ENCODE measurements at regions of chr5 and their contacts with region 1.

Region 1: GRCh38 chr5:128498844-128499455 is 39.1 kb downstream of the FBN2 start:
- DNase-seq: no peak
- ATAC-seq: no peak
- H3K4me3 ChIP-seq: no peak overlapping the region
- H3K27ac ChIP-seq: no peak overlapping the region
- H3K4me1 ChIP-seq: no peaks in the 10 kb centered on the region
- H3K27me3 ChIP-seq: no peaks in the 10 kb centered on the region
- CTCF ChIP-seq: peak; percentile 22; the same call in 1 of the 2 replicates
- EP300 ChIP-seq: no peak
- POLR2A ChIP-seq: no peak
- RAD21 ChIP-seq: no peak

Region 2: GRCh38 chr5:127875235-127876021 is 623.5 kb before region 1 on chr5:
- CTCF ChIA-PET with region 1: no interaction called
- POLR2A ChIA-PET with region 1: no interaction called
- in situ Hi-C with region 1: no loop called
- intact Hi-C with region 1: loop called (anchors 1 kb)
- DNase-seq: peak; percentile 75
- ATAC-seq: peak; percentile 98
- H3K4me3 ChIP-seq: no peak overlapping the region
- H3K27ac ChIP-seq: no peak overlapping the region
- H3K4me1 ChIP-seq: peaks cover 9% of the 10 kb centered on the region
- H3K27me3 ChIP-seq: no peaks in the 10 kb centered on the region
- CTCF ChIP-seq: peak; percentile 80
- EP300 ChIP-seq: no peak
- POLR2A ChIP-seq: no peak
- RAD21 ChIP-seq: peak; percentile 66

Region 3: DNA sequence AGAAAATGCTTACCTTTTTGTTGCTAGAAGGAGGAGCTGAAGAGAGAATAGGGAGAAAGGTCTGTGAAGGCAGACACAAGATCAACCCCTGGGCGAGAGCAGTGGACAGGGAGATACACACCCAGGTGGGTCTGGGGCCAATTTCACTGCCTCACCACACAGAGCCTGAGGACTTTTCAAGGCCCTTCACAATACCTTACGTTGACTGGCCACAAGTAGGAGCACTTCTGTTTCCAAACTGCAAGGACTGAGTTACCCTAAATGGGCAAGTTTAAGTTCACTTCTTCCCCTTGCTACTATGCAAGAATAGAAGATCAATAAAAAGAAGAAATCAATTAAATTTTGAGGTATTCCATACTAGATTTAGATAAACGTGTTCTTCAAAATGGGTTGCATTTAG is 589.9 kb before region 1 on chr5:
- CTCF ChIA-PET with region 1: no interaction called
- POLR2A ChIA-PET with region 1: no interaction called
- in situ Hi-C with region 1: no loop called
- intact Hi-C with region 1: no loop called
- DNase-seq: peak; percentile 42
- ATAC-seq: peak; percentile 97
- H3K4me3 ChIP-seq: no peak overlapping the region
- H3K27ac ChIP-seq: no peak overlapping the region
- H3K4me1 ChIP-seq: peaks cover 6% of the 10 kb centered on the region; the same call in 1 of the 2 replicates
- H3K27me3 ChIP-seq: no peaks in the 10 kb centered on the region
- CTCF ChIP-seq: peak; percentile 60
- EP300 ChIP-seq: no peak
- POLR2A ChIP-seq: no peak
- RAD21 ChIP-seq: peak; percentile 18; the same call in 1 of the 2 replicates

Measured in HepG2 (cell line).